ENCODE measurements at regions of chr14 and their contacts with region 1.

Region 1: DNA sequence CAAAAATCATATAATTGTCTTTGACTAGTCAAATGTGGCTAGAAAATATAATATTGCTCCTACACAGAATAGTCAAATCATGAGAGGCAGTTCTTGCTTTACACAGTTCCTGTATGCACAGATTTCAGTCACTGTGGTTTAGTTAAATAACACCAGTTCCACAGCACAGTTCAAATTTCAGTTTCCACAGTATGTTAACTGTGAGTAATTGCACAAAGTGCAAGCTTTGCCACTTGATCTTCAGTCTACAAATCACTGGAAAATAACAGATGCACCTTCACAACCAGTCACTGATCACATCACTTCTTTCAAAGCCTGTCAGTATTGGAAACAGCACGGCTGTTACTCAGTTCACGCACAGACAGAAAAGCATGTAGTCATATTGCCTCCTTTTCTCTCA is 38.7 kb downstream of the KCNH5 start:
- DNase-seq: no peak
- H3K4me3 ChIP-seq: no peak overlapping the region
- H3K27ac ChIP-seq: no peak overlapping the region
- H3K4me1 ChIP-seq: no peaks in the 10 kb centered on the region
- H3K27me3 ChIP-seq: peaks cover 2 to 3% of the 10 kb centered on the region in 2 experiments
- CTCF ChIP-seq: no peak
- POLR2A ChIP-seq: no peak

Region 2: GRCh38 chr14:62983821-62984220 is 22.7 kb before region 1 on chr14:
- CTCF ChIA-PET with region 1: no interaction called
- POLR2A ChIA-PET with region 1: no interaction called
- dilution Hi-C with region 1: no loop called
- intact Hi-C with region 1: loop called (anchors 1 kb)
- DNase-seq: no peak
- H3K4me3 ChIP-seq: no peak overlapping the region
- H3K27ac ChIP-seq: no peak overlapping the region
- H3K4me1 ChIP-seq: no peaks in the 10 kb centered on the region
- H3K27me3 ChIP-seq: peaks cover 0 to 2% of the 10 kb centered on the region in 2 experiments
- CTCF ChIP-seq: no peak
- POLR2A ChIP-seq: no peak